ENCODE measurements at regions of chr4 and their contacts with region 1.

Region 1: GRCh38 chr4:182925298-182925738 is 8.1 kb upstream of the DCTD start:
- DNase-seq: peak; percentile 86
- H3K4me3 ChIP-seq: no peak overlapping the region
- H3K27ac ChIP-seq: no peak overlapping the region
- H3K4me1 ChIP-seq: no peaks in the 10 kb centered on the region
- CTCF ChIP-seq: peak; percentile 91

Region 2: DNA sequence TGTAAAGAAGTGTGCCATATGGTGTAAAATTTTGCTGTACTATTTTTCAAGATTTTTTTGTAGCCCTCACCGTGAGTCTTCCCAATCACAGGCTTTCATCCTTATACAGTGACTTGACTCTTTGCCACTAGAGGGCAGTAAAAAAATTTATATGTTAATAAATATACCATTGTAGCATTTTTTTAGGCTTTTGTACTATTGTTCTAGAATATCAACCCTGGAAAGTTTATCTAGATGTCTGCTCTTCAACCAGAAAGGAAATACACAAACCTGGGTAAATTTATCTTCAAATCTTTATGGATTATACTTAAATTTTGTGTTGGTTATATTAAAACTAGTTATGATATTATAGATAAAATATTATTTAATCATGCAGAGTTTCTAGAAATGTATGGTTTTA is 446.8 kb before region 1 on chr4:
- CTCF ChIA-PET with region 1: no interaction called
- POLR2A ChIA-PET with region 1: interaction called, 3 read pairs
- intact Hi-C with region 1: loop called (anchors 1 kb)
- DNase-seq: peak; percentile 65
- H3K4me3 ChIP-seq: no peak overlapping the region
- H3K27ac ChIP-seq: no peak overlapping the region
- H3K4me1 ChIP-seq: no peaks in the 10 kb centered on the region
- CTCF ChIP-seq: peak; percentile 87

Region 3: GRCh38 chr4:182806259-182807252 is 118.8 kb before region 1 on chr4:
- CTCF ChIA-PET with region 1: no interaction called
- POLR2A ChIA-PET with region 1: no interaction called
- intact Hi-C with region 1: loop called (anchors 1 kb)
- DNase-seq: peak; percentile 37
- H3K4me3 ChIP-seq: no peak overlapping the region
- H3K27ac ChIP-seq: no peak overlapping the region
- H3K4me1 ChIP-seq: no peaks in the 10 kb centered on the region
- CTCF ChIP-seq: peak; percentile 78